Ovary (tissue), 10 donors: ENCODE measurements at regions of chr11 and their contacts with region 1.

Region 1: GRCh38 chr11:107731941-107732688 is 20.3 kb upstream of the SLN start:
- DNase-seq: no peak
- H3K4me3 ChIP-seq: no peak overlapping the region
- H3K27ac ChIP-seq: no peak overlapping the region
- H3K4me1 ChIP-seq: no peaks in the 10 kb centered on the region
- H3K27me3 ChIP-seq: no peaks in the 10 kb centered on the region
- CTCF ChIP-seq: no peak
- EP300 ChIP-seq: no peak
- POLR2A ChIP-seq: no peak

Region 2: DNA sequence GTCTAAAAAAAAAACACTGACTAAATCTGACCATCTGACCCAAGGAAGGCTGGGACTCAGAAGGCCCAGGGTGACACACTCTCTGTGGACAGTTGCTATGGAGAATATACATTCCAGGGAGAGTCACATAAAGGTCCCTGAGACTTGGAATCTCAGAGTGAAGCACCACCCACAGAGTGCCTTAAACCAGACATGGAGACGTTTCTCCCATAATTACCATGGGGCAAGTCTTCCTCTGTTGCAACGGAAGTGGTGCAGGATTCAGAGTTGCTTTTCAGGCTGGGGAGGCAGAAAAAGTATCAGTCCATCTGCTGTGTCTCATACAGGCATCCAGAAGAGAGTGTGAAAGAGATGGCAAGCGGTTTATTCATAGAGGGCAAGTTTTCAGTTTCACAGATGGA is 38.4 kb after region 1 on chr11:
- intact Hi-C with region 1: loop called in 1 of 4 experiments (anchors 2 kb)
- DNase-seq: no peak
- H3K4me3 ChIP-seq: no peak overlapping the region
- H3K27ac ChIP-seq: no peak overlapping the region
- H3K4me1 ChIP-seq: no peaks in the 10 kb centered on the region
- H3K27me3 ChIP-seq: no peaks in the 10 kb centered on the region
- CTCF ChIP-seq: no peak
- EP300 ChIP-seq: no peak
- POLR2A ChIP-seq: no peak